WTC11 (cell line): ENCODE measurements at regions of chr19 and their contacts with region 1.

Region 1: GRCh38 chr19:54463531-54464043 is at the start of gene LENG9:
- DNase-seq: peak; percentile 99
- ATAC-seq: peak; percentile 59
- H3K4me3 Mint-ChIP-seq: peak within 1 kb of the TSS; percentile 78
- H3K27ac Mint-ChIP-seq: peak within 1 kb of the TSS; percentile 99
- H3K4me1 Mint-ChIP-seq: peaks cover 7% of the 10 kb centered on the region
- H3K27me3 Mint-ChIP-seq: peaks cover 25% of the 10 kb centered on the region
- CTCF ChIP-seq: no peak
- total RNA-seq, gene LENG9: 6.1 to 7.5 TPM (median 6.9 TPM) in 3 replicates

Region 2: GRCh38 chr19:54418030-54418929 is 45.3 kb before region 1 on chr19:
- CTCF ChIA-PET with region 1: interaction called, 16 read pairs
- POLR2A ChIA-PET with region 1: interaction called, 13 read pairs
- DNase-seq: no peak
- ATAC-seq: no peak
- H3K4me3 Mint-ChIP-seq: peak overlapping the region; percentile 51
- H3K27ac Mint-ChIP-seq: peak overlapping the region; percentile 43
- H3K4me1 Mint-ChIP-seq: peaks cover 45% of the 10 kb centered on the region
- H3K27me3 Mint-ChIP-seq: peaks cover 33% of the 10 kb centered on the region
- CTCF ChIP-seq: no peak

Region 3: DNA sequence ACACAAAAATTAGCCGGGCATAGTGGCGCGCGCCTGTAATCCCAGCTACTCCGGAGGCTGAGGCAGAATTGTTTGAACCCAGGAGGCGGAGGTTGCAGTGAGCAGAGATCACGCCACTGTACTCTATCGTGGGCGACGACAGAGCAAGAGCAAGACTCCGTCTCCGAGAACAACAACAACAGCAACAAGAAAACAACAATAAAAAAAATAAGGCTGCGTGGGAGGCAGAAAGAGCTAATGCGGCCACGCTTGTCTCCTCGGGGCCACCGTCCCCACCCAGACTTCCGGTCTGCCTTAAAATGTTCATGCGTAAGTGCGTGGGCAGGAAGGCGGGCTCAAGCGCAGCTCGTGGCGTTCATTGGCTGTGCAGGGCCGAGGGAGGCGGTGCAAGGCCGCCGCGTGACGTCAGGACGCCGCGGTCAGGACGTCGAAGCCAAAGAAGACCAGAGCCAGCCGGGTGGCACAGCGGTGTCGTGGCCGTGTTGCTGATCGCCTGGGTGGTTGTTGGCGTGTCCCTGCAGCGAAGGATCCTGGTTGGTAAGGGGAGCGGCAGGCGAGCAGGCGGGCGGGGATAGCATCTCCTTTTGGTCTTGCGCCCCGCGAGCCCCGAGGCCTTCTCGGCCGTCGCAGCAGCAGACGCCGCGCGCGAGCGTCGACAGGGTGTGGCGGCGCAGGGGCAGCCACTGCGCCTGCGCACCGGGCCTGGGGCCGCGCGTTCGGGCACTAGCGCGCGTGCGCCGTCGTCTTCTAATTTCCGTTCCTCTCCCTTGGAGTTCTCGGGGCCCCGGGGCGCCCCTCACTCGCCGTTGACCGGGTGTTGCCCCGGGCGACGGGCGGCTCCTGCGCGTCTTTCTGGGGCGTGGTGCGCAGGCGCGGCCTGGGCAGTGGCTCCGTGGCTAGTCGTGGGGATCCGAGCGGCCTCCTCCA is 14.6 kb before region 1 on chr19 and contains the start of gene LENG8:
- CTCF ChIA-PET with region 1: interaction called, 13 read pairs
- POLR2A ChIA-PET with region 1: interaction called, 8 read pairs
- DNase-seq: peak; percentile 92
- ATAC-seq: peak; percentile 95
- H3K4me3 Mint-ChIP-seq: peak within 1 kb of the TSS; percentile 99
- H3K27ac Mint-ChIP-seq: peak within 1 kb of the TSS; percentile 99
- H3K4me1 Mint-ChIP-seq: peaks cover 25% of the 10 kb centered on the region
- H3K27me3 Mint-ChIP-seq: peaks cover 2% of the 10 kb centered on the region; the same call in 1 of the 2 replicates
- CTCF ChIP-seq: no peak
- total RNA-seq, gene LENG8: 175 to 187 TPM (median 187 TPM) in 3 replicates

Region 4: DNA sequence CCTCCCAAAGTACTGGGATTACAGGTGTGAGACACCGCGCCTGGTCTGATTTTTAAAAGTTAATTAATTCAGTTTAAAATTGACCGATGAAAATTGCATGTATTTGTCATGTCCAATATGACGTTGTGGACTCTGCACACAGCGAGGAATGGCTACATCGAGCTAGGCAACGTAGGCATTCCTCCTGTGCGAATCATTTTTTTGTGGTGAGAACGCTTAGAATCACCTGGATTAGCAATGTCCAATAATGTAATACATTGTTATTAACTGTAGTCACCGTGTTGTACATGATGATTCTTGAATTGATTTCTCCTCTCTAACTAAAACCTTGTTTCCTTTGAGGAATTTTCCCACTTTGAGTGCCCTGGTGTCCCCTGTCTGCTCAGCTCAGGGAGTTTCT is 42.5 kb after region 1 on chr19:
- CTCF ChIA-PET with region 1: no interaction called
- POLR2A ChIA-PET with region 1: no interaction called
- DNase-seq: no peak
- ATAC-seq: no peak
- H3K4me3 Mint-ChIP-seq: no peak overlapping the region
- H3K27ac Mint-ChIP-seq: no peak overlapping the region
- H3K4me1 Mint-ChIP-seq: no peaks in the 10 kb centered on the region
- H3K27me3 Mint-ChIP-seq: peaks cover 6% of the 10 kb centered on the region
- CTCF ChIP-seq: no peak